ENCODE measurements at regions of chr14 and their contacts with region 1.

Region 1: GRCh38 chr14:76386915-76387782 is 11.2 kb downstream of the ESRRB start:
- DNase-seq: peak; percentile 77
- H3K4me3 ChIP-seq: no peak overlapping the region
- H3K27ac ChIP-seq: no peak overlapping the region
- H3K4me1 ChIP-seq: no peaks in the 10 kb centered on the region
- H3K27me3 ChIP-seq: peaks cover 31% of the 10 kb centered on the region

Region 2: GRCh38 chr14:75709207-75709812 is 677.8 kb before region 1 on chr14:
- in situ Hi-C with region 1: loop called (anchors 25 kb)
- DNase-seq: peak; percentile 90
- H3K4me3 ChIP-seq: no peak overlapping the region
- H3K27ac ChIP-seq: no peak overlapping the region
- H3K4me1 ChIP-seq: peaks cover 14% of the 10 kb centered on the region
- H3K27me3 ChIP-seq: no peaks in the 10 kb centered on the region

Region 3: GRCh38 chr14:76050797-76051392 is 336.3 kb before region 1 on chr14:
- in situ Hi-C with region 1: loop called (anchors 5 kb)
- DNase-seq: peak; percentile 72
- H3K4me3 ChIP-seq: no peak overlapping the region
- H3K27ac ChIP-seq: no peak overlapping the region
- H3K4me1 ChIP-seq: no peaks in the 10 kb centered on the region
- H3K27me3 ChIP-seq: no peaks in the 10 kb centered on the region